Naive thymus-derived CD8-positive, alpha-beta T cell (primary cell): ENCODE measurements at regions of chr5 and their contacts with region 1.

Region 1: GRCh38 chr5:81006947-81007636 is 46.9 kb downstream of the RASGRF2 start:
- DNase-seq: peak in 9 of 10 donors; percentile 42 to 85 (median 70)
- ATAC-seq: peak; percentile 86 to 89
- H3K4me3 Mint-ChIP-seq: peak overlapping the region; percentile 81 to 91 (median 89)
- H3K27ac Mint-ChIP-seq: peak overlapping the region; percentile 85 to 99 (median 96)
- H3K4me1 Mint-ChIP-seq: peaks cover 37 to 89% (median 84%) of the 10 kb centered on the region in 4 donors
- H3K27me3 Mint-ChIP-seq: no peaks in the 10 kb centered on the region

Region 2: DNA sequence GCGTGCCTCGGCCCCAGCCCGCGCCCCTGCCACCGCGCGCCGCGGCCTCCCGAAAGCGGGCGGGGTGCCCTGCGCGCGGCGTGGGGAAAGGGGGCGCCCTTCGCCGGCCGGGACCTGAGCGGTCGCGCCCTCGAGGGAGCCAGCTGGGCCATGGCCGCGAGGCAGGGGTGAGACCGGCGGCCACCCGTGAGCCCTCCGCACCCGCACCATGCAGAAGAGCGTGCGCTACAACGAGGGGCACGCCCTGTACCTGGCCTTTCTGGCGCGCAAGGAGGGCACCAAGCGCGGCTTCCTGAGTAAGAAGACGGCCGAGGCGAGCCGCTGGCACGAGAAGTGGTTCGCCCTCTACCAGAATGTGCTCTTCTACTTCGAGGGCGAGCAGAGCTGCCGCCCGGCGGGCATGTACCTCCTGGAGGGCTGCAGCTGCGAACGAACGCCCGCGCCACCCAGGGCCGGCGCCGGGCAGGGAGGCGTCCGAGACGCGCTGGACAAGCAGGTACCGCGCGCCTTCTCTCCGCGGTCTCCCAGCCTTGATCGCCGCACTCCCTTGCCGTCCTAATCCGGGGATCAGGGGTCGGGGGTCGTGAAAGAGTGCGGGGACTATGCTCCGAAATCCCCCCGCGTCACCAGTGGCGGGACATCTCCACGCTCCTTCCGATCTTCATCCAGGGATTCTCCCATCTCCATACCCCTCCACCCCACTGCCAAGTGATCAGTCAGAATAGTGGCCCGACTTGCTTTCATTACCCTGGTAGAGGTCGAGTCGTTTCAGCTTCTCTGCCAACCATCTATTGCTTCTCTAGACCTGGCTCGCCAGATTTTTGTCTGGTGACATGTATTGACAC is 46.3 kb before region 1 on chr5:
- POLR2A ChIA-PET with region 1: interaction called, 36 read pairs
- DNase-seq: peak; percentile 25 to 75 (median 51)
- ATAC-seq: peak; percentile 48 to 60
- H3K4me3 Mint-ChIP-seq: peak overlapping the region; percentile 92 to 97 (median 93)
- H3K27ac Mint-ChIP-seq: peak overlapping the region; percentile 61 to 93 (median 92)
- H3K4me1 Mint-ChIP-seq: peaks cover 26 to 66% (median 59%) of the 10 kb centered on the region in 4 donors
- H3K27me3 Mint-ChIP-seq: peaks cover 0 to 16% (median 0%) of the 10 kb centered on the region in 5 donors

Region 3: GRCh38 chr5:80975065-80975464 is 32.0 kb before region 1 on chr5:
- POLR2A ChIA-PET with region 1: interaction called, 12 read pairs
- DNase-seq: no peak
- ATAC-seq: no peak
- H3K4me3 Mint-ChIP-seq: peak overlapping the region in 4 of 10 donors; percentile 19 to 64 (median 46)
- H3K27ac Mint-ChIP-seq: peak overlapping the region in 8 of 10 donors; percentile 15 to 87 (median 66)
- H3K4me1 Mint-ChIP-seq: peaks cover 40 to 85% (median 84%) of the 10 kb centered on the region in 4 donors
- H3K27me3 Mint-ChIP-seq: no peaks in the 10 kb centered on the region

Region 4: GRCh38 chr5:81017320-81017719 is 10.2 kb after region 1 on chr5:
- POLR2A ChIA-PET with region 1: interaction called, 11 read pairs
- DNase-seq: no peak
- ATAC-seq: no peak
- H3K4me3 Mint-ChIP-seq: peak overlapping the region in 6 of 10 donors; percentile 16 to 58 (median 35)
- H3K27ac Mint-ChIP-seq: peak overlapping the region; percentile 11 to 97 (median 44)
- H3K4me1 Mint-ChIP-seq: peaks cover 52 to 88% (median 76%) of the 10 kb centered on the region in 4 donors
- H3K27me3 Mint-ChIP-seq: no peaks in the 10 kb centered on the region